ENCODE measurements at regions of chr1 and their contacts with region 1.

Region 1: DNA sequence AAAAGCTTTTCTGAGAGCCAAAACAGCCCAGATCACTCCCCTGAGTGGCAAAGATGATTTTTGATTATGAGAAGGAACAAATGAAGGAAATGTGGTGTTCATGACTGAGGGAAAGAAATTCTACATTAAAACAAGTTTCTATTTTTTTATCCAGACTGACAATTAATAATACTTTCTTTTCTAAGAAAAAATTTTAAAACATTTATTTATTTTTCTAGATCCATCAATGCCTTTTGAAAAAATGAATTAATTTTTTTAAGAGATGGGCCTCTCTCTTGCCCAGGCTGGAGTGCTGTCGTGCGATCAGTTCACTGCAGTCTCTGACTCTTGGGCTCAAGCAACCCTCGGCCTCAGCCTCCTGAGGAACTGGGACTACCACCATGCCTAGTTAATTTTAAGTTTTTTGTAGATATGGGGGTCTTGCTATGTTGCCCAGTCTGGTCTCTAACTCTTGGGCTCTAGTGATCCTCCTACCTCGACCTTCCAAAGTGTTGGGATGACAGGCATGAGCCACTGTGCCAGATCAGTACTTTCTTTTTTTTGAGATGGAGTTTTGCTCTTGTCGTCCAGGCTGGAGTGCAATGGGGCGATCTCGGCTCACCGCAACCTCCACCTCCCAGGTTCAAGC is 11.2 kb upstream of the TXNIP start:
- DNase-seq: no peak
- ATAC-seq: no peak
- H3K4me3 ChIP-seq: no peak overlapping the region
- H3K4me3 Mint-ChIP-seq: no peak overlapping the region
- H3K27ac ChIP-seq: peak overlapping the region in 1 of 2 donors; percentile 83
- H3K27ac Mint-ChIP-seq: peak overlapping the region; percentile 95
- H3K4me1 ChIP-seq: peaks cover 13 to 24% of the 10 kb centered on the region in 2 donors
- H3K4me1 Mint-ChIP-seq: peaks cover 22% of the 10 kb centered on the region
- H3K27me3 ChIP-seq: no peaks in the 10 kb centered on the region
- H3K27me3 Mint-ChIP-seq: no peaks in the 10 kb centered on the region
- CTCF ChIP-seq: peak; percentile 18

Region 2: GRCh38 chr1:145957443-145958319 is 49.9 kb before region 1 on chr1 and contains the start of gene LIX1L:
- CTCF ChIA-PET with region 1: interaction called, 10 read pairs
- POLR2A ChIA-PET with region 1: interaction called, 4 read pairs
- intact Hi-C with region 1: no loop called
- DNase-seq: peak; percentile 96
- ATAC-seq: peak; percentile 89
- H3K4me3 ChIP-seq: peak within 1 kb of the TSS; percentile 64 to 88 (median 74)
- H3K4me3 Mint-ChIP-seq: peak within 1 kb of the TSS; percentile 99
- H3K27ac ChIP-seq: peak within 1 kb of the TSS; percentile 36 to 83
- H3K27ac Mint-ChIP-seq: peak within 1 kb of the TSS; percentile 96
- H3K4me1 ChIP-seq: peaks cover 45 to 65% of the 10 kb centered on the region in 2 donors
- H3K4me1 Mint-ChIP-seq: peaks cover 76% of the 10 kb centered on the region
- H3K27me3 ChIP-seq: no peaks in the 10 kb centered on the region
- H3K27me3 Mint-ChIP-seq: no peaks in the 10 kb centered on the region
- CTCF ChIP-seq: no peak
- total RNA-seq, gene LIX1L: 31.7 and 32.2 TPM in 2 replicates

Region 3: DNA sequence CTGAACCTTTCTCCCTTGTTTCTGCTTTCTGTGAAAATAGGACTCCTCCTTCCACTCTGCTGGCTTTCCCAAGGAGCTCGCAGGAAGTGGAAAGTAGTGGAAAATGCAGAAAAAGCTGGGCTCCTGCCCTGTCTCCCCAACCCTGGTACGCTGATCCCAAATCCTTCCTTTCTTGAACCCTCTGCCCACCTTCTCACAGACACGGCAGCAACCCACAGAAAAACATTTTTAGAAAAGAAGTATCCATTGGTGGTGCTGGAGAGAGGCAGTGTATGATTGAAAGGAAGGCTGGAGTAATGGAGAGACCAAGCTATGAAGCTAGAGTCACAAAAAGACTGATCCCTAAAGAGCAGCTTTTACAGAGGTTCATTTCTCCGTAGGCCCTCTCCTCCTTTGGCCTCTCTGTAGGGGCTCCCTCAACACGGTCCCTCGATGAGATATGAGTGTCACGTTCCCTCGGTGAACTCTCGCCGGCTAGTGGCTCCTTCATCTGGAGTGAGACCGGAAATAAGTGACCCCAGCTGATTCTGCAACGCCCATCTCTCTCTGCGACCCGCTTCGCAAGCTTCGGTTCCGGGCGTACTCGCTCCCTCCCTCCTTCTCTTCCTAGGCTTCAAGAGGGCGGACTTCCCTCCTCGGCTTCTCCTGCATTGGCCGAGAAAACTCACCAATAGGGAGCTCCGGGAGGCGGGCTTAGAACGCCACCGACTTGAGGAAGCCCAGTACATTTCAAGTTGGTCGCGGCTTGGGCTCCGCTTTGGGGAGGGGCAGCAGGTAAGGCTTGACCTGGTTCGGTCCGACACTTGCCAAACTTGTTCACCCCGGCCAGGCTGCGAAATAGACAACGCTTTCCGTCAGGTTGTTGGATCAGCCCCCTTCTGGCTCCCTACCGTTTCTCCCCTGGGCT is 43.4 kb before region 1 on chr1 and contains the starts of genes ANKRD34A and POLR3GL:
- CTCF ChIA-PET with region 1: interaction called, 13 read pairs
- POLR2A ChIA-PET with region 1: interaction called, 4 read pairs
- intact Hi-C with region 1: no loop called
- DNase-seq: peak; percentile 92
- ATAC-seq: peak; percentile 91
- H3K4me3 ChIP-seq: peak within 1 kb of the TSS; percentile 54 to 91 (median 87)
- H3K4me3 Mint-ChIP-seq: peak within 1 kb of the TSS; percentile 95
- H3K27ac ChIP-seq: peak within 1 kb of the TSS; percentile 59 to 85
- H3K27ac Mint-ChIP-seq: peak within 1 kb of the TSS; percentile 97
- H3K4me1 ChIP-seq: peaks cover 35 to 53% of the 10 kb centered on the region in 2 donors
- H3K4me1 Mint-ChIP-seq: peaks cover 61% of the 10 kb centered on the region
- H3K27me3 ChIP-seq: no peaks in the 10 kb centered on the region
- H3K27me3 Mint-ChIP-seq: no peaks in the 10 kb centered on the region
- CTCF ChIP-seq: no peak
- total RNA-seq, gene ANKRD34A: 1.8 and 2.8 TPM in 2 replicates
- total RNA-seq, gene POLR3GL: 26.3 and 33.3 TPM in 2 replicates

Measured in B cell (primary cell).